ENCODE measurements at regions of chr16 and their contacts with region 1.

Region 1: DNA sequence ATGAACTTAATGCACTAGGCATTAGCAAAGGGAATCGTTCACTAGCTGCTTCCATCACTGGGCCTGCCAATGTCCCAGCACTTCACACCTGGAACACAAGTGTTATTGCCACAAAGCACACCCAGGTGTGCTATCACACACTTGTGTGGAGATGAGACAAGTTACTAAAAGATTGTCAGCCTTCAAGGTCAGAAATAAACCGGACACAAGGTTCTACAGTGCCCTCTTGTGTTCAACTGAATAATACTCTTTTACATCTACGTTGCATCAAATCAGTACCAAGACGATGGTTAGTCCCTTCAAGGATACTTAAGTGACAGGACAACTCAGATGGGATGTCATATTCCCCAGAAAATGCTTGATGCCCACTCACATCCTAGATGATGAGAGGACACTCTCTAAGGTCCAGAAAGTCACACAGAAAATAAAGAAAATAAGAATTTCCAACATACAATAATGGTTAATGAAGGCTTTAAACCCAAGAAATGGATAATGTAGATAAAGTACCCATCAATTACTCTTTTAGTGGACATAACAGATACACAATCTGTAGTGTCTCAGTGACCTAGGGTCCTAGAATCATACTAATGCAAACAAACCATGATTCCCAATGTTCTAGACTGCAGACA is 16.4 kb upstream of the GLG1 start:
- DNase-seq: no peak
- ATAC-seq: peak; percentile 80 to 81
- H3K4me3 ChIP-seq: no peak overlapping the region
- H3K27ac ChIP-seq: peak overlapping the region in 1 of 4 donors; percentile 18
- H3K4me1 ChIP-seq: no peaks in the 10 kb centered on the region
- H3K27me3 ChIP-seq: no peaks in the 10 kb centered on the region
- CTCF ChIP-seq: peak; percentile 46 to 71 (median 58)
- POLR2A ChIP-seq: no peak

Region 2: DNA sequence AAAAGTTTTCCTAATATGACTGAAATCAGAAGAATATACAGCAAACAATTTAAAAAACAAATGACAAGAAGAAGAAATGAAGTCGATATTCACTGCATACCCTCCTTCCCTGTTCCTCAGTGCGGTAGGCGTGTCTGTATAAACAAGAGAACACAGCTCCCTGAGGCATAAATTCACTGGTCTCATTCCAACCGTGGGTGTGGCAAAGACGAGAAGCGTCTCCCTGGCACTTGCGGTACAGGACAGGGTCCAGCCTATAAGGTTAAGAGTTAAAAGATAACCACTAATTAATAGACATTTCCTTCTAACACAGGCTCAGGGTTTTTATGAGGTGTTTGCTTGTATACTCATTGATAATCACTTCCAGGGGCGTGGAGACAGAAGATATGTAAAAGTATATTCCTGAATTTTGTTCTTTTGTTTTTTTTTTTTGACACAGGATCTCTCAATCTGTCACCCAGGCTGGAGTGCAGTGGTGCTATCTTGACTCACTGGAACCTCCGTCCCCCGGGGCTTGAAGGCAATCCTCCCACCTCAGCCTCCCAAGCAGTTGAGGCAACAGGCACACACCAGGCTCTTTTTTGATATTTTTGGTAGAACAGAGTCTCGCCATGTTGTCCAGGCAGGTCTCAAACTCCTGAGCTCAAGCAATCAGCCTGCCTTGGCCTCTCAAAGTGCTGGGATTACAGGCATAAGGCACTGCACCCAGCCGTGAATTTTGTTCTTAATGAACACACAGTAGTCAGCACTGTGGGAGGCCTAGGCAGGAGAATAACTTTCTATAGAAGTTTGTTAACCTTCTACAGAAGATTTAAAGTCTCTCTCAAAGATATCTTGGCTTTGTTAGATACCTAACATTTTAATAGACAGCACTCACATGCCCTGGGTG is 142.9 kb before region 1 on chr16:
- in situ Hi-C with region 1: loop called in 2 of 4 experiments (anchors 10 to 25 kb)
- intact Hi-C with region 1: no loop called
- DNase-seq: peak; percentile 5 to 32
- ATAC-seq: peak in 1 of 2 donors; percentile 54
- H3K4me3 ChIP-seq: no peak overlapping the region
- H3K27ac ChIP-seq: peak overlapping the region in 3 of 4 donors; percentile 7 to 45 (median 36)
- H3K4me1 ChIP-seq: no peaks in the 10 kb centered on the region
- H3K27me3 ChIP-seq: no peaks in the 10 kb centered on the region
- CTCF ChIP-seq: no peak
- POLR2A ChIP-seq: no peak

Region 3: GRCh38 chr16:74501484-74502479 is 121.5 kb before region 1 on chr16:
- in situ Hi-C with region 1: loop called in 1 of 4 experiments (anchors 25 kb)
- intact Hi-C with region 1: loop called (anchors 5 kb)
- DNase-seq: no peak
- ATAC-seq: peak in 1 of 2 donors; percentile 39
- H3K4me3 ChIP-seq: no peak overlapping the region
- H3K27ac ChIP-seq: peak overlapping the region; percentile 22 to 39 (median 33)
- H3K4me1 ChIP-seq: peaks cover 18 to 22% of the 10 kb centered on the region in 2 donors
- H3K27me3 ChIP-seq: no peaks in the 10 kb centered on the region
- CTCF ChIP-seq: no peak
- POLR2A ChIP-seq: no peak

Measured in gastrocnemius medialis (tissue), 4 donors.